ENCODE measurements at regions of chr2 and their contacts with region 1.

Region 1: DNA sequence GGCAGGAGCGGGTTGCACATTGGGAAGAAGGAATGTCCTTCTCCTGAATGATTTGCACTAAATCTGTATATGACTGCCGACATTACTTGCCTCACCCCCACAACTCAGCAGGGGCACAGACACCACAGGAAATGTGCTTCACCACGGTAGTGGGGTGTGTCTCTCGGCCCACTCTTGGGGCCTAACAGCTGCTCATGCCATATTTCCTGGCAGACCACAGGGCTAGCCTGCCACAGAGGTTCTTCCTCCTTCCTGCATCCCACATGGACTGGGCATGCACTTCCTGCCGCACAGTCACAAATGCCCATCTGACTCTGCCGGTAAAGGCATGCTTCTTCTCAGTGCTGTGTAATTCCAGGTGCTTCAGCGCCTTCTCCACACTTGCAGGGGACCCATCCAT is 10.3 kb upstream of the PAPOLG start:
- DNase-seq: no peak
- H3K27ac ChIP-seq: no peak overlapping the region
- CTCF ChIP-seq: no peak

Region 2: DNA sequence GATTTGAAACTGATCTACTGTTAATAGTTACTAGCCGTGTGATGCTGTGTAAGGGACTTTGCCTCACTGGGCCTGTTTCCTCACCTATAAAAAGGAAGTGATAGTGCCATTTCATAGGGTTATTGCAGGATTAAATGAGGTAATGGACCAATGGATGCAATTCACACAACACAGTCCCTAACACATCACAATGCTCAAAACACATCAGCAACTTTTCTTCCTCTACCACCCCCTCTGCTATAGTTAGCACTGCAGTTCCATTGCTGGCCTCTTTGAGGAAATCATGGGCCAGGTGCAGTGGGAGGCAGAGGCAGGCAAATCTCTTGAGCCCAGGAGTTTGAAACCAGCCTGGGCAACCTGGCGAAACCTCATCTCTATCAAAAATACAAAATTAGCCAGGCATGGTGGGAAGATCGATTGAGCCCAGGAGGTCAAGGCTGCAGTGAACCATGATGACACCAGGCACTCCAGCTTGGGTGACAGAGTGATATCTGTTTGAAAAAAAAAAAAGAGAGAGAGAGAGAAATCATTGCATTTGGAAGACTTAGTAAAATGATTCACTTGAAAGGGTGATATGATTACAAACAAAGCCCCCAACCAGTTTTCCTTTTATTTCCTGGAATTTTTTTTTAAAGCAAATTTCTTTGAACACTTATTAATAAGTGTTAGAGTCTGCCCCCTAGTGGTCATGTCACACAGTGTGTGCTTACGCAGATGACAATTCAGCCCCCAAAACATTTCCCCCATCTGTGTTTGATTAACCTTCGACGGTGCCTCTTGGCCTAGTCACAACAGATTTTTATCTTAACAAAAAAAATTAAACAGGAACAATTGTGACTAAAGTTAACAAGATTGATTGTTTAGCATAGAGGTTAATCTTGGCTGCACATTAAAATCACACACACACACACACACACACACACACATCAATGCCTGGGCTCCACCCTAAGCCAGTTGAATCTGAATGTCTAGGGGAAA is 103.7 kb before region 1 on chr2:
- CTCF ChIA-PET with region 1: no interaction called
- POLR2A ChIA-PET with region 1: no interaction called
- DNase-seq: peak; percentile 38
- H3K27ac ChIP-seq: no peak overlapping the region
- CTCF ChIP-seq: peak; percentile 77

Region 3: DNA sequence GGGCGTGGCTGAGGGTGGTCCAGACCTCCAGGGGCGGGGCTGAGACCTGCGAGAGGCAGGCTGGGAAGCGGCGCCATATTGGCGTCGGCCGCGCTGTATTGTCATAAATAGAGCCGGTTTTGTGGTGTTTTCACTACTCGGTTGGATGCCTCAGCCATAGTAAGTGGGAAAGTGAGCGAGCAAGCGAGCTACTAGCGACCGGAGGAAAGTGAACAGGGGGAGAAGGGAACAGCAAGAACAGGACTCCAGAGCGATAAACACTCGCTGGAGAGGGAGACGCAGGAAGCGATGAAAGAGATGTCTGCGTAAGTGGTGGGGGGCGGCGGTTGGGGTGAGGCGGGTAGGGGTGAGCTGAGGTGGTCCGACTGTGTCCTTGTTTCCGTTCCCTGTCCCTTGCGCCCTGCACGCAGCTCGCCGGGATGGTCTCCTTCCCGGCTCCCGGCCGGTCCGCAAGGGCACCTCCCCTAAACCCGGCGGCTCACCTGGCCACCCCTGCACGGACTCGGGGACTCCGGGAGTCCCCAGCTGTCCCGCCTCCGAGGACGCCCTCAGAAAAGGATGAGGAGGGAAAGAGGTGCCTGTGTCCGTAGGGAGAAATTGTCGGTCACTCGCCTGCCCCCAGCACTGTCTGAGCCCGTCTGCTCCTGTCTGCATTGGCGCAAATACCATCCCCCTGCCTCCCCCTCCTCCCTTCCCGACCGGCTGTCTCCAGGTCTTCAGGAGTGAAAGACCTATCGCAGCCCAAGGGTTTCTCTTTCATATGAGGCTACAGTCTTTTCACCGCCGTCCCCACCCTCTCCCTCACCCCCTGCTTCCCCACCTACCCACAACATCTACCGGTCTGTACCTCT is 10.7 kb after region 1 on chr2 and contains the start of gene PAPOLG:
- CTCF ChIA-PET with region 1: interaction called, 10 read pairs
- POLR2A ChIA-PET with region 1: no interaction called
- DNase-seq: peak; percentile 96
- H3K27ac ChIP-seq: peak within 1 kb of the TSS; percentile 88
- CTCF ChIP-seq: no peak